ENCODE measurements at regions of chr2 and their contacts with region 1.

Region 1: GRCh38 chr2:161238560-161239325 is 69.5 kb upstream of the PSMD14 start:
- DNase-seq: peak; percentile 47
- H3K4me3 Mint-ChIP-seq: peak overlapping the region; percentile 83
- H3K27ac Mint-ChIP-seq: peak overlapping the region; percentile 73
- H3K4me1 Mint-ChIP-seq: peaks cover 58% of the 10 kb centered on the region
- H3K27me3 Mint-ChIP-seq: no peaks in the 10 kb centered on the region

Region 2: GRCh38 chr2:161223139-161223732 is 15.5 kb before region 1 on chr2:
- intact Hi-C with region 1: loop called (anchors 1 kb)
- DNase-seq: no peak
- H3K4me3 Mint-ChIP-seq: no peak overlapping the region
- H3K27ac Mint-ChIP-seq: no peak overlapping the region
- H3K4me1 Mint-ChIP-seq: peaks cover 20% of the 10 kb centered on the region
- H3K27me3 Mint-ChIP-seq: no peaks in the 10 kb centered on the region

Region 3: DNA sequence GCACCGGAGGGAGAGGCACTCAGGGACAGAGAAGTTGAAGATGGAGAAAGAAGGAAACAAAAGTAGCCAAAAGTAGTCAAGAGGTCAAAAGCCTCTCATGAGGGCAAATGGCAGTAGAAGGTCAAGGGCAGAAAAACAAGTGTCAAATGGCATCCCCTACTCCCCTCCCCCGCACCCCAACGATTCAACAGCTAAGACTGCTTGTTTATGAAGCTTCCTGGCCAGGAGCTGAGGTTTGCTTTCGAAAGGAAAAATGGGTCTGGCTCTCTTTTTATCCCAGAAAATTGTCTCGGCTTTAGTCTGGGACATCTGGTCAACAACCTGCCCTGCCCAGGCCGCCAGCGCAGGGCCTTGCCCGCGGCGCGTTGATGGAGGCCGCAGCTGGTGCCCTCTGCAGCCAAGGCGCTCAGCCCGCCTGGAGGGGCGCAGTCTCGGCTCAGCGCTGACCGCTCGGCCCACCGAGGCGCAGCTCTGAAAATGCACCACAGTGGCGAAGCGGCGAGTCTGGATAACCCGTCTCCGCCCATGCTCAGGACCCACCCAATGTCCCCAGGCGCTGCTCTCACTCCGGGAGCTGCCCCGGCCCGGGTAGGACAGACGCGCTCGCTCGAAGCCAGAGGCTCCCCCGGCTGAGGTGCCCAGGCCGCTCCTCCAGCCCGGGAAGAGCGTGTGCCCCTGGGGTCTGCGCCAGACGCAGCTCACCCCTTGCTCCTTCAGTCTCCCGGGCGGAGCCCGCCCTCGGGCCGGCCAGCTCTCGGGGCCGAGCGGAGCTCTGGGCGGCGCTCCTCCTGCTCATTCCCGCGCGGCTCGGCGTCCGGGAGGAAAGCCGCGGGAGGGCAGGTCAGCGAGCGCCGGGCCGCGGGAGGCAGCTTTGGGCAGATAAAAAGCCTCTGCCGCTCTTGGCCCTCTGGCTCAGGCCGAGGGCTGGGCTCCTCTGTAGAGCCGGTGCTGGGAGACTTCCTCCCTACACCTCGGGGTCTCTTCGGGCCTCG is 175.6 kb after region 1 on chr2:
- intact Hi-C with region 1: loop called (anchors 5 kb)
- DNase-seq: no peak
- H3K4me3 Mint-ChIP-seq: peak overlapping the region; percentile 75
- H3K27ac Mint-ChIP-seq: no peak overlapping the region
- H3K4me1 Mint-ChIP-seq: peaks cover 53% of the 10 kb centered on the region
- H3K27me3 Mint-ChIP-seq: peaks cover 52% of the 10 kb centered on the region

Region 4: GRCh38 chr2:162318328-162319180 is 1079.8 kb after region 1 on chr2 and contains the start of gene IFIH1:
- intact Hi-C with region 1: loop called (anchors 5 kb)
- DNase-seq: peak; percentile 79
- H3K4me3 Mint-ChIP-seq: peak within 1 kb of the TSS; percentile 93
- H3K27ac Mint-ChIP-seq: peak within 1 kb of the TSS; percentile 100
- H3K4me1 Mint-ChIP-seq: peaks cover 65% of the 10 kb centered on the region
- H3K27me3 Mint-ChIP-seq: no peaks in the 10 kb centered on the region
- total RNA-seq, gene IFIH1: 27.9 TPM in 2 replicates

Measured in activated T-helper 1 cell treated with anti-CD3 and anti-CD28 coated beads, Interleukin-12 subunit alpha, Interleukin-12 subunit beta, Interleukin-2, Interleukin-4 antibody, amounts not matched to agents 30 ng/mL and 10 ng/mL and 1 ng/mL, durations not matched to agents 14 hours and 24 hours and 36 hours (primary cell).